Mammary epithelial cell (primary cell): ENCODE measurements at regions of chr2 and their contacts with region 1.

Region 1: GRCh38 chr2:69914170-69914960 is 544 bp upstream of the MXD1 start:
- DNase-seq: peak; percentile 100
- H3K4me3 ChIP-seq: peak overlapping the region; percentile 63 to 91 (median 79)
- H3K27ac ChIP-seq: peak overlapping the region; percentile 90
- H3K4me1 ChIP-seq: peaks cover 31% of the 10 kb centered on the region
- H3K27me3 ChIP-seq: no peaks in the 10 kb centered on the region
- CTCF ChIP-seq: peak in 1 of 2 donors; percentile 10

Region 2: DNA sequence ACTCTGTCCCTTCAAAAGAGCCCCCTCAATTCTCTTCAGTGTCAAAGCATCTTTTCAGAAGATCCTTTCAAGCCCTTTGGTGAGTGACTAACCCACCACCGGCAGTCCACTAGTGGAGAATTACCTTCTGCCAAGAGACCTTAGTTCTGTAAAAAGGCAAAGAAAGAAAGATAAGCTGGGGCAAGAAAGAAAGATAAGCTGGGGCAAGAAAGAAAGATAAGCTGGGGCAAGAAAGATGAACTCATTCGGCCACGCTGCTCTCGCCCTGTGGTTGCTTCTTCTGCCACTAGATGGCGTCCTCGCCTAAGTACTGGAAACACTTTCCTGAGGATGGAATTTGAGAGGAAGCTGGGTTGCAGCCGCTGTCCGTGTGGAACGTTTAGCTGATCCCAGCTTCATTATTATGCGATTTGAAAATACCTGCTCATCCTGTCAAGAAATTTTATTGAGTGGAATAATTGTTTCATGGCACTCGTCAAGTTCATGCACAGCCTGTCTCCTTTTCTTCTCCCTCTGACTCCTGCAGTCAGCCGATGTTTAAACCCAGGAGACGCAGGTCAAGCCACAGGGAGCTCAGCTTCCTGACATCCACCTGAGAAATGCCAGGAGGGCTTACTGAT is 189.7 kb before region 1 on chr2:
- CTCF ChIA-PET with region 1: interaction called, 5 read pairs
- dilution Hi-C with region 1: no loop called
- in situ Hi-C with region 1: no loop called
- intact Hi-C with region 1: loop called (anchors 2 kb)
- DNase-seq: peak; percentile 64
- H3K4me3 ChIP-seq: peak overlapping the region in 1 of 3 experiments; percentile 29
- H3K27ac ChIP-seq: no peak overlapping the region
- H3K4me1 ChIP-seq: no peaks in the 10 kb centered on the region
- H3K27me3 ChIP-seq: no peaks in the 10 kb centered on the region
- CTCF ChIP-seq: peak; percentile 86 to 87

Region 3: DNA sequence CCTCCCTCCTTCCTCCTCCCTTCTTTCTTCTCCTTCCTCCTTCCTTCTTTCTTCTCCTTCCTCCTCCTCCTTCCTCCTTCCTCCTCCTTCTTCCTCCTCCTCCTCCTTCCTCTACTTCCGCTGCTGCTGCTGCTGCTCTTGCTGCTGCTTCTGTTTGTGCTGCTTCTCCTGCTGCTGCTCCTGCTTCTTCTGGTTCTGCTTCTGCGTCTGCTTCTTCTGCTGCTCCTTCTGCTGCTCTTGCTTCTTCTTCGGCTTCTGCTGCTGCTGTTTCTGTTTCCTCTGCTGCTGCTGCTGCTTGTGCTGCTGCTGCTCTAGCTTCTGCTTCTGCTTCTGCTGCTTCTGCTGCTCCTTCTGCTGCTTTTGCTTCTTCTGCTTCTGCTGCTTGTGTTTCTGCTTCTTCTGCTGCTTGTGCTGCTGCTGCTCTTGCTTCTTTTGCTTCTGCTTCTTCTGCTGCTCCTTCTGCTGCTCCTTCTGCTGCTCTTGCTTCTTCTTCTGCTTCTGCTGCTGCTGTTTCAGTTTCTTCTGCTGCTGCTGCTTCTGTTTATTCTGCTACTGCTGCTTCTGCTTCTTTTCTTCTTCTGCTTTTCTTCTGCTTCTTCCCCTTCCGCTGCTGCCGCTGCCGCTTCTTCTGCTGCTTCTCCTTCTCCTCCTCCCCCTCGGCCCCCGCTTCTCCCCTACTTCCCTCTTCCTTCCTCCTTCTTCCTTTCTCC is 12.0 kb before region 1 on chr2:
- CTCF ChIA-PET with region 1: no interaction called
- dilution Hi-C with region 1: no loop called
- in situ Hi-C with region 1: no loop called
- intact Hi-C with region 1: no loop called
- DNase-seq: no peak
- H3K4me3 ChIP-seq: no peak overlapping the region
- H3K27ac ChIP-seq: no peak overlapping the region
- H3K4me1 ChIP-seq: no peaks in the 10 kb centered on the region
- H3K27me3 ChIP-seq: no peaks in the 10 kb centered on the region
- CTCF ChIP-seq: no peak

Region 4: GRCh38 chr2:69975500-69976462 is 61.4 kb after region 1 on chr2:
- CTCF ChIA-PET with region 1: no interaction called
- dilution Hi-C with region 1: loop called (anchors 5 kb)
- in situ Hi-C with region 1: no loop called
- intact Hi-C with region 1: no loop called
- DNase-seq: no peak
- H3K4me3 ChIP-seq: no peak overlapping the region
- H3K27ac ChIP-seq: no peak overlapping the region
- H3K4me1 ChIP-seq: no peaks in the 10 kb centered on the region
- H3K27me3 ChIP-seq: no peaks in the 10 kb centered on the region
- CTCF ChIP-seq: no peak

Region 5: DNA sequence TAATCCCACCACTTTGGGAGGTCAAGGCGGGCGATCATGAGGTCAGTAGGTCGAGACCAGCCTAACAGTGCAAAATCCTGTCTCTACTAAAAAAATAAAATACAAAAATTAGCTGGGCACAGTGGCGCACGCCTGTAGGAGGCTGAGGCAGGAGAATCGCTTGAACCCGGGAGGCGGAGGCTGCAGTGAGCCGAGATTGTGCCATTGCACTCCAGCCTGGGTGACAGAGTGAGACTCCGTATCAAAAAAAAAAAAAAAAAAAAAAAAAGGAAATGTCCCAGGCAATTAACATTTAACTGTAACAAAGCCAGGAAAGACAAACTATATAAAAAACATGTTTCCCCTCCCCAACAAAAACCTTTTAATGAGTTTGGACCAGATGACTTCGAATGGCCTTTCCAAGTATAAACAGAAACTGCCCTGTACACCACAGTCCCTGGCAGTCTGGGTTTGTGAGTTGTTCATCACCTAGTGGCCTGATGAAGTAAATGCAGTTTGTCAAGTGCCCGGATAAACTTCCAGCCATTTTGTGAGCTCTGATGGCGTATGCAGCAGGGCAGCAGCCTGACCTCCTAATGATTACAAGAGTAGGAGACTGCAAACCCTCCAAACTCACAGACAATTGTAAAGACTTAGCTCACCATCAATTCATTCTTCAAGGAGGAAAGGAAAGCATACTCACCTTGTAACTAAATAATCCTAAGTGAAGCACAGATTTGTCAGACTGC is 156.3 kb after region 1 on chr2:
- CTCF ChIA-PET with region 1: interaction called, 9 read pairs
- dilution Hi-C with region 1: no loop called
- in situ Hi-C with region 1: loop called (anchors 5 to 10 kb)
- intact Hi-C with region 1: loop called (anchors 1 kb)
- DNase-seq: peak; percentile 82
- H3K4me3 ChIP-seq: no peak overlapping the region
- H3K27ac ChIP-seq: peak overlapping the region; percentile 58
- H3K4me1 ChIP-seq: peaks cover 13% of the 10 kb centered on the region
- H3K27me3 ChIP-seq: no peaks in the 10 kb centered on the region
- CTCF ChIP-seq: peak; percentile 94

Region 6: DNA sequence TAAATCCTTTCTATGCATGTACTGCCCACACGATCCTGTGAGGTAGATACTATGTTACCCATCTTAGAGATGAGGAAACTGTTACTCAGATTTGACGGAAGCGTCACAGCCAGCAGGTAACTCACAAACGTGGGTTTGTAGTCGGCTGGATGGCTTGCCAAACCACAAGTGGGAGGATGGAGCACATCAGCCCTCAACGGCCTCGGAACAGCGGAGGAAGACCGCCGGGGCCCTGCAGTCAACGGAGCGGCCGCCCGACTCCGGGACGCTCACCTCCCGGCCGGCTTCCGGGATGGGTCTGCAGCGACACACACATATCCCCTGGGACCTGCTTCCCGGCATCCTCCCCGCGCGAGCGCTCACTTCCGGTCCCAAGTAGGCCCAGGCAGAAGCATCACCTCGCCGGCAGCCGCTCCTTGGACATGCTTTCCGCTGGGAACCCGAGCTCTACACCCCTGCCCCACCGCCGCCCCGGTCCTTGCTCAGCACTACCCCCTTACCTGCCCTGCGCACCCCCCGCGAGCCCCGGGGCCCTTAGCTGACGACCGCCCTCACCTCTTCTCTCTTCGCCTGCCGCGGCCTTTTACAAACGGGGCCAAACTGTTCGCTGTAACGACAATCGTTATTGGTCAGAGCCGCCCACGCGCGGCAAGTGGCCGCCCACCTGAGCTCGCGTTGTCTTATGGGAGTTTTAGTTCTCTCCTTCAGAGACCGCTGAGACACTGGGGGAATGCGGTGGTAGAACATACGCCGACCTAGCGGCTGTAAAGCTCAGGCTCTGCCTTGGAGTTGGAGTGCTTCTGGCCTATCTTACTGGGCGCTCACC is 276.3 kb after region 1 on chr2 and contains the start of gene C2orf42:
- CTCF ChIA-PET with region 1: no interaction called
- dilution Hi-C with region 1: no loop called
- in situ Hi-C with region 1: no loop called
- intact Hi-C with region 1: loop called (anchors 2 kb)
- DNase-seq: peak; percentile 97
- H3K4me3 ChIP-seq: peak within 1 kb of the TSS; percentile 77 to 84 (median 79)
- H3K27ac ChIP-seq: peak within 1 kb of the TSS; percentile 91
- H3K4me1 ChIP-seq: peaks cover 4% of the 10 kb centered on the region
- H3K27me3 ChIP-seq: no peaks in the 10 kb centered on the region
- CTCF ChIP-seq: no peak
- total RNA-seq, gene C2orf42: 17.3 to 20.2 TPM

Region 7: GRCh38 chr2:70214953-70215549 is 300.7 kb after region 1 on chr2:
- CTCF ChIA-PET with region 1: no interaction called
- dilution Hi-C with region 1: no loop called
- in situ Hi-C with region 1: no loop called
- intact Hi-C with region 1: no loop called
- DNase-seq: no peak
- H3K4me3 ChIP-seq: no peak overlapping the region
- H3K27ac ChIP-seq: no peak overlapping the region
- H3K4me1 ChIP-seq: no peaks in the 10 kb centered on the region
- H3K27me3 ChIP-seq: no peaks in the 10 kb centered on the region
- CTCF ChIP-seq: no peak

Region 8: DNA sequence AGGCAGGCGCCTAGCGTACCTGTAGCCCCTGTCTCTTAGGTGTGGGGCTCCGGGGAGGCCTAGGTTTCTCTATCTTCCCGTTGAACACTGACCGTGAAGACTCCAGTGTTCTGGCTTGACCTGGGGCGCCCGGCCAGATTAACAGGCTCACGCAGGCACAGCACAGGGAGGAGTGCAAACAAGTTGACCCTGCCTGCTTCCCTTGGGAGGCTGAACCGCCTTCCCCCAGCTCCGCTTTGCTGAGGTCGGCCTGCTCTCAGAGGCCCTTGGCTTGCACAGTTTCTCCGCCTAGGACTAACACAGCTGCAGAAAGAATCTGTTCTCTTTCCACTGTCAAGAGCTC is 344.1 kb after region 1 on chr2:
- CTCF ChIA-PET with region 1: no interaction called
- dilution Hi-C with region 1: loop called (anchors 25 kb)
- in situ Hi-C with region 1: no loop called
- intact Hi-C with region 1: no loop called
- DNase-seq: peak; percentile 41
- H3K4me3 ChIP-seq: peak overlapping the region; percentile 46 to 93 (median 75)
- H3K27ac ChIP-seq: peak overlapping the region; percentile 9
- H3K4me1 ChIP-seq: peaks cover 9% of the 10 kb centered on the region
- H3K27me3 ChIP-seq: no peaks in the 10 kb centered on the region
- CTCF ChIP-seq: no peak